Activated CD4-positive, alpha-beta T cell treated with anti-CD3 and anti-CD28 coated beads, Interleukin-2, amount 10 ng/mL, durations not matched to agents 24 days and 14 days (primary cell): ENCODE measurements at regions of chr11 and their contacts with region 1.

Region 1: GRCh38 chr11:110125592-110125991 is 32.4 kb downstream of the ZC3H12C start:
- DNase-seq: no peak
- H3K4me3 Mint-ChIP-seq: no peak overlapping the region
- H3K27ac Mint-ChIP-seq: no peak overlapping the region
- H3K4me1 Mint-ChIP-seq: no peaks in the 10 kb centered on the region
- H3K27me3 Mint-ChIP-seq: peaks cover 20% of the 10 kb centered on the region

Region 2: GRCh38 chr11:110148775-110149744 is 23.5 kb after region 1 on chr11:
- intact Hi-C with region 1: loop called (anchors 1 kb)
- DNase-seq: no peak
- H3K4me3 Mint-ChIP-seq: no peak overlapping the region
- H3K27ac Mint-ChIP-seq: no peak overlapping the region
- H3K4me1 Mint-ChIP-seq: no peaks in the 10 kb centered on the region
- H3K27me3 Mint-ChIP-seq: peaks cover 27% of the 10 kb centered on the region

Region 3: DNA sequence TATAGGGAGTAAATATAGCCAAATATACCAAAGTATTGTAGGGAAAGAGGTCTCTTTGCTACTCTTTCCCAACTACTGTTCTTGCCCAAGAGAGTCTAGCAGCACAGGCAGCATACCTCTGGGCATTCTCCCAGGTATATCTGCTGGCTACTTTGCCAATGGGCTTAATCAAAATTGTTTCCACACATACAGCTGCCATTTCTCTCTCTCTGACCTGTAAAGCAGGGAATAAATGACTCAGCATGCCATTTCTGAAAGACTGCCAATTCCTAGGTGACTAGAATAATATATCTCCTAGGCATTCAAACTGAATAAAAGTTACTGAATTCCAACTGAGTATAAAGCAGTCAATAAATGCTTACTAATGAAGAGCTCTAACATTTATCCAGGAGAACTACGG is 126.2 kb after region 1 on chr11:
- intact Hi-C with region 1: no loop called
- DNase-seq: no peak
- H3K4me3 Mint-ChIP-seq: no peak overlapping the region
- H3K27ac Mint-ChIP-seq: no peak overlapping the region
- H3K4me1 Mint-ChIP-seq: peaks cover 2% of the 10 kb centered on the region
- H3K27me3 Mint-ChIP-seq: no peaks in the 10 kb centered on the region